ENCODE measurements at regions of chr14 and their contacts with region 1.

Region 1: GRCh38 chr14:22047115-22047514 is 373.5 kb upstream of the OR4E1 start:
- DNase-seq: peak; percentile 48
- ATAC-seq: peak; percentile 84
- H3K4me3 Mint-ChIP-seq: peak overlapping the region; percentile 51
- H3K27ac Mint-ChIP-seq: peak overlapping the region; percentile 87
- H3K4me1 Mint-ChIP-seq: peaks cover 36% of the 10 kb centered on the region
- H3K27me3 Mint-ChIP-seq: no peaks in the 10 kb centered on the region
- CTCF ChIP-seq: peak; percentile 43

Region 2: GRCh38 chr14:22002860-22003309 is 44.2 kb before region 1 on chr14:
- CTCF ChIA-PET with region 1: interaction called, 3 read pairs
- POLR2A ChIA-PET with region 1: no interaction called
- intact Hi-C with region 1: loop called (anchors 5 kb)
- DNase-seq: peak; percentile 86
- ATAC-seq: peak; percentile 79
- H3K4me3 Mint-ChIP-seq: peak overlapping the region; percentile 81
- H3K27ac Mint-ChIP-seq: peak overlapping the region; percentile 92
- H3K4me1 Mint-ChIP-seq: peaks cover 17% of the 10 kb centered on the region
- H3K27me3 Mint-ChIP-seq: no peaks in the 10 kb centered on the region
- CTCF ChIP-seq: peak; percentile 58

Region 3: DNA sequence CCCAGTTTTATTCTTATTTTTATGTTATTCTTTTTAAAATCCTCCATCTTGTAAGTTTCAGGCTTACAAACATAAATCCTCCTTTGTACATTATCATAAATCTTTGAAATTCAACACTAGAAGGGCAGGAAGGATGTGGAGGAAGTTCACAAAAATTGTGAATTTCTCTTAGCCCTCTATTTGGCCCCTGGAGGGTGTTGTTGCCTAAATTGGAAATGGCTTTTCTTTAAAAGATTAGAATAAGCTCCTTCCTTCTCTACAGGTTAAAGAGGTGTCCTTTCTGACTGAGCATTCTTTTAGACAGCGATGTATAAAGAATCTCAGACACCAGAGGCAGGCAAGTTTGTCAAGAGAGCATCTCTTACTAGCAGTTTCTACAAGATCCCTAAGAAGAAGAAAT is 18.2 kb after region 1 on chr14:
- CTCF ChIA-PET with region 1: interaction called, 12 read pairs
- POLR2A ChIA-PET with region 1: no interaction called
- intact Hi-C with region 1: no loop called
- DNase-seq: no peak
- ATAC-seq: no peak
- H3K4me3 Mint-ChIP-seq: peak overlapping the region; percentile 52
- H3K27ac Mint-ChIP-seq: peak overlapping the region; percentile 59
- H3K4me1 Mint-ChIP-seq: peaks cover 19% of the 10 kb centered on the region
- H3K27me3 Mint-ChIP-seq: no peaks in the 10 kb centered on the region
- CTCF ChIP-seq: no peak

Region 4: GRCh38 chr14:22084393-22085281 is 37.5 kb after region 1 on chr14:
- CTCF ChIA-PET with region 1: interaction called, 4 read pairs
- POLR2A ChIA-PET with region 1: no interaction called
- intact Hi-C with region 1: loop called (anchors 5 kb)
- DNase-seq: peak; percentile 31
- ATAC-seq: peak; percentile 71
- H3K4me3 Mint-ChIP-seq: peak overlapping the region; percentile 67
- H3K27ac Mint-ChIP-seq: peak overlapping the region; percentile 87
- H3K4me1 Mint-ChIP-seq: peaks cover 26% of the 10 kb centered on the region
- H3K27me3 Mint-ChIP-seq: no peaks in the 10 kb centered on the region
- CTCF ChIP-seq: peak; percentile 50

Region 5: DNA sequence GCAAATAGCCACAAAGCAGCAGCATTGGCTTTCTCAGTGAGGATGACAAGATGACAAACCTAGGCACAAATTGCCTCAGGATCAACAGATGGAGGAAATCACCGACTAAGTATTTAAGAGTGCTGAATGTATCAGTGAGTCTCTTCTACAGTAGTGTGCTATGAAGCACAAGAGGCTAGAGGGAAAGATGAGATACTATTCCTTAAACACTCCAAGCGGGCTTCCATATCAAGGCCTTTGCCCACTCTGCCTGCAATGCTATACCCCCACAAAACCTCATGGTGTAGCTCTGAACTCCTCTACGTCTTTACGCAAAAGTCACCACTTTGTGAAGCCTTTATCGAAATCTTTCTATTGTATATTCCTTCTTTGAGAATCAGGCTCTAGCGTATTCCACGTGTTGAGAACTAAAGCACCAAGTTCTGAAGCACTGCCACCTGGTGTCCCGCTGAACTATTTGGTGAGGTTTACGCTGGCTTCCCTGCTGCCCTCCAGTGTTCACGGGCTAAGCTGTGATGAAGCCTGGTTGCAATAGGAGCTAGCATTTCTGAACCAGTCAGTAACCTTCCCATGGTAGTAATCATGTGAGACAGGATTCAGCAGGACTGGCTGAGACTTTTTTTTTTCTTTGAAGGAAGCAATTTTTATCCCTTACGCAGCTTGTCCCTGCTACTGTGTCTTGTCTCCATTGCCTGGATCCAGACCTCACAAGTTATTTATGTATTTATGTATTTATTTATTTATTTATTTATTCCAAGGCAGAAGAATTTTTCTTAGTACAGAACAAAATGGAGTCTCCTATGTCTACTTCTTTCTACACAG is 53.0 kb after region 1 on chr14:
- CTCF ChIA-PET with region 1: interaction called, 14 read pairs
- POLR2A ChIA-PET with region 1: no interaction called
- intact Hi-C with region 1: loop called (anchors 5 kb)
- DNase-seq: peak; percentile 79
- ATAC-seq: peak; percentile 67
- H3K4me3 Mint-ChIP-seq: no peak overlapping the region
- H3K27ac Mint-ChIP-seq: peak overlapping the region; percentile 38
- H3K4me1 Mint-ChIP-seq: peaks cover 48% of the 10 kb centered on the region
- H3K27me3 Mint-ChIP-seq: no peaks in the 10 kb centered on the region
- CTCF ChIP-seq: peak; percentile 39

Measured in activated CD8-positive, alpha-beta T cell treated with anti-CD3 and anti-CD28 coated beads for 36 hours (primary cell).